SK-N-SH (cell line): ENCODE measurements at regions of chr1 and their contacts with region 1.

Region 1: DNA sequence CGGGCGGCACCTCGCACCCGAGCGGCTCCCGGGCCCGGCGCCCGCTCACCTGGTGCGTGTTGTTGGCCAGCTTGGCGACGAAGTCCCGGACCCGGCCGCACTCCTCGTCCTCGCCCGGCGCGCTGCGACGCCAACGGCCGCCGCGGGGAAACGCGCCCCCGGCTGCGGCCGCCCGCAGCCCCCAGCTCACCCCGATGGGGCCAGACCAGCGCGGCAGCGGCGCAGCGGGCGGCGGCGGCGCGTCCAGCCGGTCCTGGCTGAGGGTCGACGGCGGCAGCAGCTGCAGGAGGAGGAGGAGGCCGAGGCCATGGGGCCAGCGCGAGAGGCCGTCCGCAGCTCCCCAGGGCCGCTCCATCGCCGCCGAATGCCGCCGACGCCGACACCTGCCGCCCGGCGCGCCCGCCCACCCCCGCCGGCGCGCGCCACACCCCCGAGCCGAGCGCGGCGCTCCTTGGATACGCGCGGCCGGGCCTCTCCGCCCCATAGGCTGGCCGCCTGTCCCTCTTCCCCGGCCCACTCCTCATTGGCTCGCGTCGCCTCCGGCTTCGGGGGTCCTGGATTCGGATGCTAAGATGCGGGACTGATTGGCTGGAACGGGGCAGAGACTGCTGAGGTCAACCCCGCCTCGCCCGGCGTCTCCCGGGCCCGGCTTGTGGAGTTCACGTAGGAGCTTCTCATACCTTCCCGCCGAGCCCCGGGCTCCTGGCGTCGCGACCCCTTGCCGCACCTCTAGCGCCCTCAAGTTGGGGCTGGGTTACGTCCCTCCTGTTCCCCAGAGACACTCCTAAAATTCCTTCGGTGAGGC is at the start of gene SORT1:
- DNase-seq: peak; percentile 96
- H3K4me3 ChIP-seq: peak within 1 kb of the TSS; percentile 72 to 88
- H3K27ac ChIP-seq: peak within 1 kb of the TSS; percentile 39 to 82; a peak in 3 of 4 replicates
- H3K4me1 ChIP-seq: peaks cover 14 to 19% of the 10 kb centered on the region in 2 experiments; a peak in 3 of 4 replicates
- H3K27me3 ChIP-seq: no peaks in the 10 kb centered on the region
- CTCF ChIP-seq: no peak; the same call in 1 of the 2 replicates
- EP300 ChIP-seq: no peak
- RAD21 ChIP-seq: no peak; the same call in 1 of the 2 replicates
- polyA plus RNA-seq, gene SORT1: 8.5 and 13.7 TPM in 2 replicates

Region 2: DNA sequence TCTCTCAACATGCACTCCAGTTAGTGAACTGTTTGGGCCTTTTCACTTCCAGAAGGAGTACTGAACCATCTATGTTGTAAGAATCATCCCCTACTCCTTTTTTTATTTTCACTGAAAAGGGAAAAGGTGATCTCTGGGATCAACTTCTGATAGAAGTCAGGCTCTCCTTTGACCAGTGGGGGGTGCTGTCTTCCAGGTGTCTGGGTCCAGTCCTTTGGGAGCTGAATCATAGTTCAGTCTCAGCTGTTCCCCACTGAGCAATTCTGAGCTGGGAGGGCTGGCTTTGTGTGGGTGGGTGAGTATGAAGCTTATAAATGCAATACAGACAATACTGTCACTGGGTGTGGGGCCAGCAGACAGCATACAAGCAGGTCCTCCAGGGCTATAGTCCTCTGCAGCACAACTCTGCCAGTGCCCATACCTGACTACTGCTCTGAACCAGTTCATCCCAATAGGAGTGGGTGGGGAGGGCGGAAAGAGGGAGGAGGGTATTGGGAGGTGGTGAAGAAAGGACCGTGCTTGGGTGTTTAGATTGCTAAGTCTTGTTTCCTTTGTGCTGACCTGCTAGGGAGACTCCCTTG is 196.5 kb before region 1 on chr1:
- CTCF ChIA-PET with region 1: interaction called, 10 read pairs
- POLR2A ChIA-PET with region 1: no interaction called
- DNase-seq: peak; percentile 56
- H3K4me3 ChIP-seq: peak overlapping the region in 1 of 2 experiments; percentile 36; a peak in 1 of 4 replicates
- H3K27ac ChIP-seq: no peak overlapping the region
- H3K4me1 ChIP-seq: peaks cover 5 to 10% of the 10 kb centered on the region in 2 experiments; a peak in 3 of 4 replicates
- H3K27me3 ChIP-seq: no peaks in the 10 kb centered on the region
- CTCF ChIP-seq: peak; percentile 79
- EP300 ChIP-seq: no peak
- RAD21 ChIP-seq: peak; percentile 68

Region 3: DNA sequence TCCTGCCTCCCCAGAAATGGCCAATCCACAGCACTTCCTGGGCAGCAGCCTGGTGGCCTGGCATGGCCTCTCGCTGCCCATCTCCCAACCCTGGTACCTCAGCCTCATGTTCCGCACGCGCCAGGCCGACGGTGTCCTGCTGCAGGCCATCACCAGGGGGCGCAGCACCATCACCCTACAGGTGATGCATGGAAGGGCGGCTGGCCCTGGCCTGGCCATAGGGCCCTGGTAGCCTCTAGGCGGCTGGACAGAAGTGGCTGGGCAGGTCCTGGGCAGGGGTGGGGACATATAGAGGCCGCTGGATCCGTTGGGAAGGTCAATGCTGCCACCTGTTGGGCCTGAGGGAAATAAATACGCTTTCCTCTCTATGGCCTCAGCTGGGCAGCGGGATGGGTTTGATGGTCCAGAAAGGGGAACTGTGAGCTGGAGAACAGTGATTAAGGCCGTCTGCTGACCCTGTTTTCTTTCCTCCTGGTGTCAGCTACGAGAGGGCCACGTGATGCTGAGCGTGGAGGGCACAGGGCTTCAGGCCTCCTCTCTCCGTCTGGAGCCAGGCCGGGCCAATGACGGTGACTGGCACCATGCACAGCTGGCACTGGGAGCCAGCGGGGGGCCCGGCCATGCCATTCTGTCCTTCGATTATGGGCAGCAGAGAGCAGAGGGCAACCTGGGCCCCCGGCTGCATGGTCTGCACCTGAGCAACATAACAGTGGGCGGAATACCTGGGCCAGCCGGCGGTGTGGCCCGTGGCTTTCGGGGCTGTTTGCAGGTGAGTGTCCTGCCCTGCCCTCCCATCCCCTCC is 133.9 kb before region 1 on chr1:
- CTCF ChIA-PET with region 1: interaction called, 61 read pairs
- POLR2A ChIA-PET with region 1: interaction called, 3 read pairs
- DNase-seq: peak; percentile 98
- H3K4me3 ChIP-seq: peak overlapping the region in 1 of 2 experiments; percentile 2; a peak in 1 of 4 replicates
- H3K27ac ChIP-seq: peak overlapping the region in 1 of 2 experiments; percentile 0; a peak in 1 of 4 replicates
- H3K4me1 ChIP-seq: peaks cover 0 to 22% of the 10 kb centered on the region in 2 experiments; a peak in 2 of 4 replicates
- H3K27me3 ChIP-seq: no peaks in the 10 kb centered on the region
- CTCF ChIP-seq: peak; percentile 92
- EP300 ChIP-seq: no peak
- RAD21 ChIP-seq: peak; percentile 87

Region 4: DNA sequence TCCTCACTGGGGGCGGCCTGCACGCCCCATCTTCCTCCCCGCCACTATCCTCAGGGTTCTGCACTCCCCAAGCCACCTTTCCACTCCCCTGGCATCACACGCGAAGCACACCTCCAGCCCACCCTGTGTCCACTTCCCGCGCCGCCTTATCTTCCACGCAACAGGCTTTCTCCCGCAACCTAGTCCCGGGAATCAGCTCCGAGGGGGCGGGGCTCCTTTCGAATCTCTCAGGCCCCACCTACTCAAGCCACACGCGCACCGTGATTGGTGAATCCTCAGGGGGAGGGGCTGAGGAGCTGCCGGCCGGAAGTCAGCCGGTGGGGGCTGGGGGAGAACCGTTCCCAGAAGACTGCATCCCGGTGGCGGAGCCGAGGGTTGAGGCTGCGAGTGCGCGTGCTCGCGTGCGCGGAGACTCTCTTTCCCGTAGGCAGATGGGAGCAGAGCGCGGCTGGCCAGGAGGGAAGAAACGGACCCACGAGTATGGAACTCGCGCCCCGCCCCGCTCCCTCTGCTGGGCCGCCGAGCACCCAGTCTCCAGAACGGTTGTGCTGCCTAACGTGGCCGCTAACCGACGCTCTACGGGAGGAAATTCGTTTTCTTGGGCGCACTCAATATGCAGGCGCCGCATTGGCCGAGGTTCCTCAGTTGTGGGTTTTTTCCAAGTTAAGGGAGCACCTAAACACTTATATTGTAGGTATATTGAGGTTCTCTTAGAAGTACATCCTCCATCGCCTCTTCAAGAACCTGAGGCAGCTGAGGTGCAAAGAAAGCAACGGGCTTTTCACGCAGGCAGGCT is 114.6 kb before region 1 on chr1 and contains the start of gene PSRC1:
- CTCF ChIA-PET with region 1: interaction called, 252 read pairs
- POLR2A ChIA-PET with region 1: interaction called, 14 read pairs
- DNase-seq: peak; percentile 99
- H3K4me3 ChIP-seq: peak within 1 kb of the TSS; percentile 69 to 84
- H3K27ac ChIP-seq: peak within 1 kb of the TSS; percentile 73 to 96
- H3K4me1 ChIP-seq: peaks cover 0 to 18% of the 10 kb centered on the region in 2 experiments; a peak in 1 of 4 replicates
- H3K27me3 ChIP-seq: no peaks in the 10 kb centered on the region
- CTCF ChIP-seq: peak; percentile 46
- EP300 ChIP-seq: no peak; a peak in 1 of 4 replicates
- RAD21 ChIP-seq: no peak
- polyA plus RNA-seq, gene PSRC1: 19.4 and 20.3 TPM in 2 replicates

Region 5: DNA sequence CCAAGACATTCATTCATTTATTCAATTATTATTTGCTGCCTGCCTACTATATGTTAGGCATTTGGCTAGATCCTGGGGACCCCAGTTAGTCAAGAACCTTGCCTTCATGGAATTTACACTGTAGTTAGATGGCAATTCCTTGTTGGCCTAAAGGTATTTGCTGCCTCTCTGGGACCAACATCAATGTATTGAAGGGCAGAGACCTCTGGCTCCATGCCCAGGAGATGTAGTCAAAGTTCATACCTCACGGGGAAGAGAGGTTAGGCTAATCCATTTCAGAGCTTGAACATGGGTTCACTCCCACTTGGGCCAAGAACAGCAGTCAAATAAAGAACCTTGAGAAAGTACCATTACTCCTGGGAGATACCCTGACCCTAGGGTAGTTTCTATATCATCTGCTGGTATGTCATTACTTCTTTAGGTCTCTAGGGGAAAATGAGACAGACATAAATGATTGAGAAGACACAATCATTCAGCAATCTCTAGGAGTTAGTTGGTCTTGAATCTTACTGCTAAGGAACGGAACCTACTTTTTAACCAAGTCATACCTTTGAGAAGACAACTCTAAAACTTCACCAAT is 32.0 kb before region 1 on chr1:
- CTCF ChIA-PET with region 1: no interaction called
- POLR2A ChIA-PET with region 1: no interaction called
- DNase-seq: no peak
- H3K4me3 ChIP-seq: no peak overlapping the region
- H3K27ac ChIP-seq: no peak overlapping the region
- H3K4me1 ChIP-seq: peaks cover 0 to 25% of the 10 kb centered on the region in 2 experiments; a peak in 2 of 4 replicates
- H3K27me3 ChIP-seq: no peaks in the 10 kb centered on the region
- CTCF ChIP-seq: no peak
- EP300 ChIP-seq: no peak
- RAD21 ChIP-seq: no peak

Region 6: GRCh38 chr1:109379422-109379821 is 18.3 kb before region 1 on chr1:
- CTCF ChIA-PET with region 1: interaction called, 30 read pairs
- POLR2A ChIA-PET with region 1: no interaction called
- DNase-seq: no peak
- H3K4me3 ChIP-seq: no peak overlapping the region
- H3K27ac ChIP-seq: no peak overlapping the region
- H3K4me1 ChIP-seq: peaks cover 10 to 18% of the 10 kb centered on the region in 2 experiments; a peak in 3 of 4 replicates
- H3K27me3 ChIP-seq: no peaks in the 10 kb centered on the region
- CTCF ChIP-seq: no peak
- EP300 ChIP-seq: no peak
- RAD21 ChIP-seq: no peak

Region 7: GRCh38 chr1:109412551-109412950 is 14.8 kb after region 1 on chr1:
- CTCF ChIA-PET with region 1: interaction called, 20 read pairs
- POLR2A ChIA-PET with region 1: interaction called, 3 read pairs
- DNase-seq: no peak
- H3K4me3 ChIP-seq: no peak overlapping the region
- H3K27ac ChIP-seq: no peak overlapping the region
- H3K4me1 ChIP-seq: no peaks in the 10 kb centered on the region
- H3K27me3 ChIP-seq: no peaks in the 10 kb centered on the region
- CTCF ChIP-seq: no peak
- EP300 ChIP-seq: no peak
- RAD21 ChIP-seq: no peak